Mammary epithelial cell (primary cell): ENCODE measurements at regions of chr19 and their contacts with region 1.

Region 1: GRCh38 chr19:38693380-38694223 is 46.2 kb downstream of the ACTN4 start:
- DNase-seq: peak; percentile 98
- H3K4me3 ChIP-seq: peak overlapping the region in 2 of 3 experiments; percentile 5 to 15
- H3K27ac ChIP-seq: peak overlapping the region; percentile 99
- H3K4me1 ChIP-seq: peaks cover 93% of the 10 kb centered on the region
- H3K27me3 ChIP-seq: no peaks in the 10 kb centered on the region
- CTCF ChIP-seq: no peak

Region 2: DNA sequence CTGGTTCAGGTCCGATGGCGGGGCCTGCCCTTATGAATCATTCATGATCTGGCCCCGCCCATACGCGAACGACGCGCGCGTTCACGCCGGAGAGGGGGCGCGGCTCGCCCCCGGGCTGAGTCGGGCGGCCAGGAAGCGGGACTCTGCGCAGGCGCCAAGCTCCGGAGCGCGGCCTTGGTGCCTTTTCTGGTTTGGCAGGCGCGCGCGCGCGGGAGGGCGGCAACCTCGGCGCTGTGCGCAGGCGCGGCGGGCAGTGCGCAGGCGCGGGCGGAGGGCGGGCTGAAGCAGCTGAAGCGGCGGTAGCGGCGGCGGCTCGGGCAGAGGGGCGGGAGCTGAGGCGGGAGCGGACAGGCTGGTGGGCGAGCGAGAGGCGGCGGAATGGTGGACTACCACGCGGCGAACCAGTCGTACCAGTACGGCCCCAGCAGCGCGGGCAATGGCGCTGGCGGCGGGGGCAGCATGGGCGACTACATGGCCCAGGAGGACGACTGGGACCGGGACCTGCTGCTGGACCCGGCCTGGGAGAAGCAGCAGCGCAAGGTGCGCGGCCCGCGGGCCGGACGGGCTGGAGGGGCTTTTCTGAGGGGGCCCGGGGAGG is 46.1 kb before region 1 on chr19 and contains the start of gene ACTN4:
- CTCF ChIA-PET with region 1: no interaction called
- dilution Hi-C with region 1: no loop called
- in situ Hi-C with region 1: loop called in 1 of 2 experiments (anchors 5 kb)
- intact Hi-C with region 1: no loop called
- DNase-seq: peak; percentile 96
- H3K4me3 ChIP-seq: peak within 1 kb of the TSS; percentile 89 to 99 (median 95)
- H3K27ac ChIP-seq: peak within 1 kb of the TSS; percentile 100
- H3K4me1 ChIP-seq: peaks cover 20% of the 10 kb centered on the region
- H3K27me3 ChIP-seq: no peaks in the 10 kb centered on the region
- CTCF ChIP-seq: no peak
- total RNA-seq, gene ACTN4: 951 to 1,146 TPM

Region 3: GRCh38 chr19:38683393-38684080 is 10.1 kb before region 1 on chr19:
- CTCF ChIA-PET with region 1: no interaction called
- dilution Hi-C with region 1: no loop called
- in situ Hi-C with region 1: no loop called
- intact Hi-C with region 1: loop called (anchors 1 kb)
- DNase-seq: peak; percentile 99
- H3K4me3 ChIP-seq: no peak overlapping the region
- H3K27ac ChIP-seq: peak overlapping the region; percentile 99
- H3K4me1 ChIP-seq: peaks cover 76% of the 10 kb centered on the region
- H3K27me3 ChIP-seq: no peaks in the 10 kb centered on the region
- CTCF ChIP-seq: no peak